ENCODE measurements at regions of chr22 and their contacts with region 1.

Region 1: GRCh38 chr22:43263645-43264514 is 76.9 kb upstream of the TTLL12 start:
- DNase-seq: peak; percentile 93
- ATAC-seq: peak; percentile 94
- H3K4me3 Mint-ChIP-seq: peak overlapping the region; percentile 49
- H3K27ac Mint-ChIP-seq: peak overlapping the region; percentile 16
- H3K4me1 Mint-ChIP-seq: peaks cover 26% of the 10 kb centered on the region
- H3K27me3 Mint-ChIP-seq: peaks cover 3% of the 10 kb centered on the region

Region 2: DNA sequence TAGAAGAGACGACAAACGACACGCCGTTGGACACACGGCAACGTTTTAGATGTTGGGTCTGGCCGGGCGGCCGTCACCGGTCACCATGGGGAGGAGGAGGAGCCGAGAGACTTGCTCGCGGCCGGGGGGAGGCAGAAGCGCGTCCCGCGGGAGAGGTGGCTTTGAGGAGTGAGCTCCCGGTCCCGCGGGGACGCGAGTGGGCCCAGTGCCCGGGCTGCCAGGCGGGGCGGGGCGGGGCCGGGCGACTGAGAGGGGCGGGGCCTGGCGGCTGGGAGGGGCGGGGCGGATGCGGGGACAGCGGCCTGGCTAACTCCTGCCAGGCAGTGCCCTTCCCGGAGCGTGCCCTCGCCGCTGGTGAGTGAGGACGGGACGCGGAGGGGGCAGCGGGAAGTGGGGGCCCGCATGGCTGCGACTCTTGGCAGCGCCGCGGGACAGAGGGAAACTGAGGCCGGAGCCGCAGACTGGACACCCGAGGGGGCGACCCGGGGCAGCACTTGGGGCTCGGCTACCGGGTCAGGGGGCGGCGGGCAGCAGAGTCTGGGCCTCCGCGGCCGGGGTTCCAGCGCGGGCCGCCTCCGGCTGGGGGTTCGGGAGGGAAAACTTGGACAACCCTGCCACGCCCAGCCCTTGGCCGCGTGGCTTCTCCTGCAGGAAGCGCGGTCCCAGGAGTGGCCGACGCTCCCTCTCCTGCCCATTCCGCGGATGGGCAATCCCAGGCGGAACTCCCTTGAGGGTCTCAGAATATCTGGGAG is 112.5 kb before region 1 on chr22 and contains the start of gene TSPO:
- CTCF ChIA-PET with region 1: no interaction called
- POLR2A ChIA-PET with region 1: no interaction called
- intact Hi-C with region 1: no loop called
- DNase-seq: peak; percentile 81
- ATAC-seq: peak; percentile 58
- H3K4me3 Mint-ChIP-seq: peak within 1 kb of the TSS; percentile 88
- H3K27ac Mint-ChIP-seq: peak within 1 kb of the TSS; percentile 90
- H3K4me1 Mint-ChIP-seq: peaks cover 35% of the 10 kb centered on the region
- H3K27me3 Mint-ChIP-seq: no peaks in the 10 kb centered on the region
- total RNA-seq, gene TSPO: 61.7 to 114 TPM

Region 3: GRCh38 chr22:43230971-43231723 is 32.7 kb before region 1 on chr22:
- CTCF ChIA-PET with region 1: interaction called, 5 read pairs
- POLR2A ChIA-PET with region 1: no interaction called
- intact Hi-C with region 1: loop called in 1 of 2 experiments (anchors 1 kb)
- DNase-seq: peak; percentile 83
- ATAC-seq: peak; percentile 89
- H3K4me3 Mint-ChIP-seq: no peak overlapping the region
- H3K27ac Mint-ChIP-seq: no peak overlapping the region
- H3K4me1 Mint-ChIP-seq: peaks cover 4% of the 10 kb centered on the region
- H3K27me3 Mint-ChIP-seq: peaks cover 3% of the 10 kb centered on the region

Region 4: GRCh38 chr22:43867839-43868652 is 604.2 kb after region 1 on chr22:
- CTCF ChIA-PET with region 1: no interaction called
- POLR2A ChIA-PET with region 1: no interaction called
- intact Hi-C with region 1: no loop called
- DNase-seq: peak; percentile 63
- ATAC-seq: no peak
- H3K4me3 Mint-ChIP-seq: no peak overlapping the region
- H3K27ac Mint-ChIP-seq: no peak overlapping the region
- H3K4me1 Mint-ChIP-seq: no peaks in the 10 kb centered on the region
- H3K27me3 Mint-ChIP-seq: peaks cover 31% of the 10 kb centered on the region